Activated naive CD4-positive, alpha-beta T cell treated with anti-CD3 and anti-CD28 coated beads, Interleukin-2, amount 10 ng/mL, durations not matched to agents 7 days and 5 days (primary cell): ENCODE measurements at regions of chr14 and their contacts with region 1.

Region 1: DNA sequence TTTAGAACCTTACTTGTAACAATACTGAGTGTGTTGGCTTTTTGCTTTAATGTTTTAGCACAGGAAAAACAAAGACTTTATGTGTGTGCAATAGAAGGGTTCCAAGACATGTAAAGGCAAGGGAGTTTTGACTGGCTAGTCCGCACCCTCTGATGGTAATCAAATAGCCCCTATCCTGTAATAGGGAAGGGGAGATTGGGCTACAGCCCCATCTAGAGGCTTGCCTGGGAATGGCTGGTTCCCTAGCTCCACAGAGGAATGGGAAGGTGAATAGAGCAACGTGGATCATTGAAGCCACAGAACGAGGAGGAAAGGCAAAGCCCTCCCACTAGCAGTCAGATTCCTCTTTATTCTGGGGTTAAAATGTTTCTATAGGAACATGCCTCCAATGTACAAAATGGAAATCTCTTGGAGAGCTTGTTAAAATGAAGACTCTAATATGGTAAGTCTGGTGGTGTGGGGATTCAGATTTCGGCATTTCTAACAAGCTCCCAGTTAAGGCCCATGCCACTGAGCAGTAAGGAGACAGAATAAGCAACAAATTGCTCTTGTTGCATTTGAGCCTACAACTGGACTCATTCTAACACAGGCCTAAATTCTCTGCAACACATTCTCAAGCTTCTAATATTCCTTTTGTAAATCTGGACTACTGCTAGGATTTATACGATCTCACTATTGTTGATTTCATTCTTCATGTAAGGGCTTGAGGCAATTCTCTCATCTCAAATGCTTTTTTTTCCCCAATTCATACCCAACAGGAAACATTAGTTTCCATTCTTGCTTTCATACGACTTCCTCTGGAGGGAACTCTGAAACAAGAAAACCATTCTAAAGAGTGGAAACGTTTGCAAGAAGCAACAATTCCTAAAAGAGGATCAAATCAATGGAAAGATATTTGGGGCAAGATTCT is 57.1 kb downstream of the NIN start:
- DNase-seq: peak; percentile 48
- H3K4me3 Mint-ChIP-seq: no peak overlapping the region
- H3K27ac Mint-ChIP-seq: no peak overlapping the region
- H3K4me1 Mint-ChIP-seq: peaks cover 22% of the 10 kb centered on the region
- H3K27me3 Mint-ChIP-seq: no peaks in the 10 kb centered on the region

Region 2: GRCh38 chr14:50531595-50532501 is 242.0 kb before region 1 on chr14:
- CTCF ChIA-PET with region 1: no interaction called
- DNase-seq: peak; percentile 52
- H3K4me3 Mint-ChIP-seq: peak overlapping the region; percentile 89
- H3K27ac Mint-ChIP-seq: peak overlapping the region; percentile 84
- H3K4me1 Mint-ChIP-seq: peaks cover 39% of the 10 kb centered on the region
- H3K27me3 Mint-ChIP-seq: peaks cover 14% of the 10 kb centered on the region

Region 3: GRCh38 chr14:50542941-50543418 is 230.9 kb before region 1 on chr14:
- CTCF ChIA-PET with region 1: interaction called, 40 read pairs
- DNase-seq: peak; percentile 60
- H3K4me3 Mint-ChIP-seq: no peak overlapping the region
- H3K27ac Mint-ChIP-seq: no peak overlapping the region
- H3K4me1 Mint-ChIP-seq: peaks cover 13% of the 10 kb centered on the region
- H3K27me3 Mint-ChIP-seq: peaks cover 12% of the 10 kb centered on the region

Region 4: DNA sequence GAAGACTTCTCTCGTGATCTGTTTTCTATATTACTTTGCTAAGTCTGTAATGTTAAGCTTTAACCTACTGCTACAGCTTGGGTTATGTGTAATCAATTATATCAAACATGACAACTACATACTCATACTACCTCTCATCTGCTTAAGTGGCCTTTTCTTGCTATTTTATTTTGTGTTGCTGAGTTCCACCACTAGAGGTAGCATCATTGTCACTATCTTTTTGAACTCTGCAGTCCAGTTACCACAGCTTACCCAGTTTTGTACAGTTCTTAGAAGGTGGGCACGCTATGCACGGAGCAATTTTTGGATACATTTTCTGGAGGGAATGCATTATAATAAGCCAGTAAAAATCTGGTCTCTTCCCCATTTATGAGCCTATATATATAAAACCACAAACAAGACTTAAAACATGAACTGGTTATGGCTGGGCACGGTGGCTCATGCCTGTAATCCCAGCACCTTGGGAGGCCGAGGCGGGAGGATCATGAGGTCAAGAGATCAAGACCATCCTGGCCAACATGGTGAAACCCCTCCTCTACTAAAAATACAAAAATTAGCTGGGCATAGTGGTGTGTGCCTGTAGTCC is 154.2 kb before region 1 on chr14:
- CTCF ChIA-PET with region 1: interaction called, 44 read pairs
- DNase-seq: no peak
- H3K4me3 Mint-ChIP-seq: no peak overlapping the region
- H3K27ac Mint-ChIP-seq: no peak overlapping the region
- H3K4me1 Mint-ChIP-seq: no peaks in the 10 kb centered on the region
- H3K27me3 Mint-ChIP-seq: no peaks in the 10 kb centered on the region

Region 5: DNA sequence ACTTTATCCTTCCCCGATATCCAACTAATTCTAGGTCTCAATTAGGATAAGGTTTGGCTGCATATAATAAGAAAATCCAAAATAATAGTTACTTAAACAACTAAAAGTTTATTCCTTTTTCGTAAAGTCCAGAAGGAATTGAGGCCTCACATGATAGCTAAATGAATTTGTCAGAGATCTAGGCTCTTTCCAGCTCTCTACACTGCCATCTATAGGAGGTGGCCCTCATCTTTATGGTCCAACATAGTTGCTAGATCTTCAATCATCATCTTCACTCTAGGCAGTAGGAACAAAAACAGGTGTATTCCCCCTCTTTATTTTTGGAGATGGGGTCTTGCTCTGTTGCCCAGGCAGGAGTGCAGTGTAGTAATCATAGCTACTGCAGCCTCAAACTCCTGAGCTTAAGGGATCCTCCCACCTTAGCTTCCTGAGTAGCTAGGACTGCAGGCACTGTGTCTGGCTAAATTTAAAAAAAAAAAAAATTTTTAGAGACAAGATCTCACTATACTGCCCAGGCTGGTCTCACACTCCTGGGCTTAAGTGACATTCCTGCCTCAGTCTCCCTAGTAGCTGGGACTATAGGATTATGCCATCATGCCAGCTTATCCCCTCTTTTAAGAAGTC is 59.3 kb before region 1 on chr14:
- CTCF ChIA-PET with region 1: interaction called, 19 read pairs
- DNase-seq: no peak
- H3K4me3 Mint-ChIP-seq: no peak overlapping the region
- H3K27ac Mint-ChIP-seq: no peak overlapping the region
- H3K4me1 Mint-ChIP-seq: no peaks in the 10 kb centered on the region
- H3K27me3 Mint-ChIP-seq: peaks cover 10% of the 10 kb centered on the region

Region 6: DNA sequence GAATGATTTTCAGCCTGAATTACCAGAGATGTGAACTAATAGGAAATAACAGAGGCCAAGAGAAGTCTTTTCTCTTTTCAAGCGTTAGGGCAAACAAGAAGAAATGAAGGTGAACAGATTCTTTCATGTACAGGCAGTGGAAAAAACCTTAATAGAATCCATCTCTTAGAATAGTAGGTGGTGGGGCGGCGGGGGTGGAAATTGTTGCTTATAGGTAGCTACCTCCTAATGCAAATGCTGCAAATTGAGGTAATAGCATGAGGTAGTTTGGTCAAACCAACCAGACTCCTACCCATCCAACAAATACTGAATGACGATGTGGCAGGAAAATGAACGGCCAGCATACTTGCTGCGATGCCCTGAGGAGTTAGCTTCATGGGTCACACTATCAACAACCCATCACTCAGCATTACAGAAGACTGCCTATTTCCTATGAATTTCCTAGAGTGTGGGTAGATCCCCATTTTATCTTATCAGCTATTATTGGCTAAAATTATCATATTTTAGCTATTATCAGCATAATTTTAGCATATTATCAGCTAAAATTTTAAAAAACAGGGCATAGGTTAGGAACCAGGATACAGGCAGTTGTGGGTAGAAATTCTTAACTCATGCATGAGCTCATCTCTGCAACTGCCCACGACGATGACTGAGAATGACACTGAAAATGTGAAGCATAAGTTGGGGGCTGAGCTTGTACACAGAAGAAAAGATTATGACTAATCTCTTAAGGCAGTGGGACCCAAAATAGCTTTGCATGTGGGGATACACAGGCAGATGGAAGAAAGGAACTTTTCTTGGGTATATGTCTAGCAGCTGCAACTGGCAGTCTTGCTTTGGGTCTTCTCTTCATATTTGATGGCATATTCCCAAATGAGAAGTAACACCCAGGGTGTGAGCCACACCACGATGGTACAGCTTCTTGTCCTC is 11.6 kb before region 1 on chr14:
- CTCF ChIA-PET with region 1: interaction called, 48 read pairs
- DNase-seq: no peak
- H3K4me3 Mint-ChIP-seq: no peak overlapping the region
- H3K27ac Mint-ChIP-seq: no peak overlapping the region
- H3K4me1 Mint-ChIP-seq: no peaks in the 10 kb centered on the region
- H3K27me3 Mint-ChIP-seq: no peaks in the 10 kb centered on the region